ENCODE measurements at regions of chr3 and their contacts with region 1.

Region 1: GRCh38 chr3:184017672-184018423 is at the start of gene ABCC5:
- DNase-seq: peak; percentile 91 to 97 (median 95)
- H3K4me3 ChIP-seq: peak within 1 kb of the TSS; percentile 55 to 100 (median 97)
- H3K27ac ChIP-seq: peak within 1 kb of the TSS; percentile 68 to 99 (median 94)
- H3K27me3 ChIP-seq: no peaks in the 10 kb centered on the region
- CTCF ChIP-seq: peak in 51 of 56 donors; percentile 8 to 79 (median 56)
- total RNA-seq, gene ABCC5: 66.9 to 160 (median 119) TPM

Region 2: GRCh38 chr3:183895296-183895695 is 122.6 kb before region 1 on chr3:
- intact Hi-C with region 1: loop called (anchors 2 to 5 kb)
- DNase-seq: peak in 1 of 10 donors; percentile 24
- H3K4me3 ChIP-seq: peak overlapping the region in 1 of 59 donors; percentile 29
- H3K27ac ChIP-seq: no peak overlapping the region
- H3K27me3 ChIP-seq: no peaks in the 10 kb centered on the region
- CTCF ChIP-seq: peak; percentile 62 to 93 (median 82)

Region 3: GRCh38 chr3:183959214-183959613 is 58.6 kb before region 1 on chr3:
- intact Hi-C with region 1: no loop called
- DNase-seq: no peak
- H3K4me3 ChIP-seq: no peak overlapping the region
- H3K27ac ChIP-seq: no peak overlapping the region
- H3K27me3 ChIP-seq: no peaks in the 10 kb centered on the region
- CTCF ChIP-seq: no peak

Region 4: GRCh38 chr3:184154885-184155643 is 137.2 kb after region 1 on chr3 and contains the start of gene DVL3:
- intact Hi-C with region 1: loop called in 1 of 2 experiments (anchors 5 kb)
- DNase-seq: peak in 9 of 10 donors; percentile 46 to 82 (median 57)
- H3K4me3 ChIP-seq: peak within 1 kb of the TSS; percentile 72 to 97 (median 91)
- H3K27ac ChIP-seq: peak within 1 kb of the TSS; percentile 78 to 98 (median 95)
- H3K27me3 ChIP-seq: no peaks in the 10 kb centered on the region
- CTCF ChIP-seq: peak in 3 of 56 donors; percentile 19 to 31 (median 21)
- total RNA-seq, gene DVL3: 48.6 to 82.7 (median 65.1) TPM

Region 5: GRCh38 chr3:184249412-184250166 is 231.7 kb after region 1 on chr3 and contains the start of gene EEF1AKMT4:
- intact Hi-C with region 1: loop called (anchors 2 to 10 kb)
- DNase-seq: peak; percentile 87 to 97 (median 95)
- H3K4me3 ChIP-seq: peak within 1 kb of the TSS; percentile 54 to 100 (median 85)
- H3K27ac ChIP-seq: peak within 1 kb of the TSS; percentile 48 to 94 (median 87)
- H3K27me3 ChIP-seq: no peaks in the 10 kb centered on the region
- CTCF ChIP-seq: peak in 51 of 56 donors; percentile 25 to 71 (median 49)
- total RNA-seq, gene EEF1AKMT4: 0.25 to 1.6 (median 0.52) TPM in 80 of 120 experiments, not detected in the others

Region 6: DNA sequence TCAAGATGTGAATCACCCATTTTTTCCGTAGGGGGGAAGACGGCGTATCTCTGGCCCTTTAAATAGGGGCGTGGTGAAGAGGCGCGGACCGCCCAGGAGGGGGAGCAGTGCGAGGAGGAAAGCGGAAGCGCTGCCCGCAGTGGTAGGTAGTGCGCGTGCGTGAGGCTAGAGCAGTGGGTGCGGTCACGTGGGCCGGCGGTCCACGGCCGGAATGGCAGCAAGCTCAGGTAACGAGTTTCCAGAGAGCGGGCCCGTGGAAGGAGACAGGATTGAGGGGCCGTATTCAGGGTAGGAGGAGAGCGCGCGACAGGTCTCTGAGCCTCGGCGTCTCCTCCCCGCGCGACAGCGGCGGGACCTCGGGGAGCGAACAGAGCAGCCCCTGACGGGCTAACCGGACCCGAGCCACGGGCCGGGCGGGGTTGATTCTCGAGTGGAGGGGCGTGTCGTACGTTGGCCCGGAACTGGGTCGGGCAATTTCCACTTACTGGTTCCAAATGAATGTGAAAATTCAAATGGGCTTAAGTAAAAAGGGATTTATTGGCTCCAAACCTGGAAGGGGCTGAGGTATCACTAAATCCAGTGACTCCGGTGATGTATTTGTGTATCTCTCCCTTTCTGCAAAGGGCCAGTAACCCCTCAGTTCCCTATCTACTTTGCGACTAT is 794.3 kb after region 1 on chr3 and contains the start of gene VPS8:
- intact Hi-C with region 1: loop called in 1 of 2 experiments (anchors 5 kb)
- DNase-seq: peak; percentile 92 to 97 (median 94)
- H3K4me3 ChIP-seq: peak within 1 kb of the TSS; percentile 68 to 100 (median 94)
- H3K27ac ChIP-seq: peak within 1 kb of the TSS in 51 of 59 donors; percentile 10 to 92 (median 72)
- H3K27me3 ChIP-seq: no peaks in the 10 kb centered on the region
- CTCF ChIP-seq: peak; percentile 72 to 96 (median 86)
- total RNA-seq, gene VPS8: 78.0 to 146 (median 110) TPM

Measured in dorsolateral prefrontal cortex (tissue), 120 donors.